Ovary (tissue), 10 donors: ENCODE measurements at regions of chr6 and their contacts with region 1.

Region 1: GRCh38 chr6:151440930-151441329 is 11.0 kb downstream of the RMND1 start:
- DNase-seq: no peak
- H3K4me3 ChIP-seq: no peak overlapping the region
- H3K27ac ChIP-seq: peak overlapping the region in 1 of 2 donors; percentile 39
- H3K4me1 ChIP-seq: peaks cover 7% of the 10 kb centered on the region
- H3K27me3 ChIP-seq: no peaks in the 10 kb centered on the region
- CTCF ChIP-seq: peak in 2 of 3 donors; percentile 62 to 63
- EP300 ChIP-seq: no peak
- POLR2A ChIP-seq: no peak

Region 2: DNA sequence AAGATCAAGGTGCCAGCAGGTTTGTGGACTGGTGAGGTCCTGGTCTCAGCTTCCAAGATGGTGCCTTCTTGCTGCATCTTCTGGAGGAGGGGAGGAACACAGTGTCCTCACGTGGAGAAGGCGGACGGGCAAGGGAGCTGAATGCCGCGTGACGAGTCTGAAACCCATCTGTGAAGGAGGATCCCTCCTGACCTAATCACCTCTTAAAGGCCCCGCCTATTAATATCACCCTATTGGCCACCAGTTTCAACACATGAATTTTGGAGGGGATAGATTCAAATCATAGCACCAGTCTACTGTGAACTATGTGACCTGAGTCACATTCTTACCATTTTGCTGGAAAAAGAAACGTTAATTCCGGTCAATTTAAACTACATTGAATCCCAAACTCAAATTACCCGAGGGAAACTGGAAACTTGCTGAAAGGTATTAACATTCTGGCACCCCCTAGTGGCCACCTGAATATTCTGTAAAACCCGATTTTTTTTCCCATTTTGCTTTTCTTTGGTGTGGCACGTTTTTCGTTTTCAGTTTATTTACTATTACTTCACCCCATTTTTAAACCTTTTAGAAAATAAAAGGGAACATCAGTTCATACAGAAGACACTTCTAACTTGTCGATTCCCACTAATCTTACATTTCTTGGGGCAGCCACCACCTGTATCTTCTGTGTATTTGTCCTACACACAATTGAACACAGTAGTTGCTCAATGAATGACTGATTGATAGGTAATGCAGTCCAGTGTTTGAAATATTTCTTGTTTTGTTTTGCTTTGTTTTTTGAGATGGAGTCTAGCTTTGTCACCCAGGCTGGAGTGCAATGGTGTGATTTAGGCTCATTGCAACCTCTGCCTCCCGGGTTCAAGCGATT is 35.0 kb after region 1 on chr6:
- intact Hi-C with region 1: loop called in 1 of 4 experiments (anchors 5 kb)
- DNase-seq: peak in 3 of 5 donors; percentile 34 to 64 (median 59)
- H3K4me3 ChIP-seq: no peak overlapping the region
- H3K27ac ChIP-seq: no peak overlapping the region
- H3K4me1 ChIP-seq: peaks cover 5% of the 10 kb centered on the region
- H3K27me3 ChIP-seq: no peaks in the 10 kb centered on the region
- CTCF ChIP-seq: peak; percentile 70 to 85 (median 77)
- EP300 ChIP-seq: no peak
- POLR2A ChIP-seq: no peak